ENCODE measurements at regions of chr17 and their contacts with region 1.

Region 1: DNA sequence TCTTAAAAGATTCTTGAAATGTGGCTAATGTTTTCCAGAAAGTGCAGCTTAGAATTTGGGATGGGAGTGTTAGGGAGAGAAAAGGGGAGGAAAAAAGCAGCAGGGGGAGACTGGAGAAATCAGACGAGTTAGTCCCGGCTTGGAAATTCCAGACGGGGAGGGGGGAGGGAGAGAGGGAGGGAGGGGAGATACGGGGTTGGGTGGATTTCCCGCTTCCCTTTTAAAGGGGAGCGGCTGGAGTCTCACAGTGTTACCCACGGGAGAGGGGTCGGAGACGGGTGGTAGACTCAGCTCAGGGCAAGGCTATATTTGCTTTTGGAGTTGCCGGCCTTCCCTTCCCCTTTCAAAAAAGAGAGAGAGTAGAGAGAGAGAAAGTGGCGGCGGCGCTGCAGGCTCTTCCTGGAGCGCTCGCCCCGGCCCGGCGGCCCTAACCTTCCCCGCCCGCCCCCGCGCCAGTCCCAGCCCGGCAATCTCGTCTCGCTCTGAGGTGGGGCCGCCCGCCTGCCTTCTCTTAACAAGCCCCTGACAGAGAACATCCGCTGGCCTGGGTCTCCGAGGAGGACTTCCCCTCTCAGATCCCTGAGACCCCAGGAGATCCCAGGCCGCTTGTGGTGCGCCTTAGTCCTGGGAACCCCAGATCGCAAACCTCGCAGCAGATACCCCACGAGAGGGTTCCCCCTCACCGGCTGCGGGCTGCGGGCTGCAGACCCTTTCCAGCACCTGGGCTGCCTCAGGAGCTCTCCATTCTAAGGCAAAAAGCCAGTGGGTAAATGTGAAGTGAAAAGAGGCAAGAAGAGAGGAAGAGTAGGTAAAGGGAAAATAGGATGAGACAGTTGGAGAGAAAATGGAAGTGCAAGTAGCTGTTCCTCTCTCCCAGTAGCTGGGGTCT is 6.7 kb downstream of the IGF2BP1 start:
- DNase-seq: no peak
- ATAC-seq: peak; percentile 69
- H3K4me3 ChIP-seq: peak overlapping the region; percentile 62 to 97 (median 62)
- H3K27ac ChIP-seq: peak overlapping the region; percentile 95
- H3K4me1 ChIP-seq: peaks cover 72% of the 10 kb centered on the region
- H3K27me3 ChIP-seq: no peaks in the 10 kb centered on the region; a peak in 1 of 5 replicates
- CTCF ChIP-seq: peak; percentile 26; the same call in 1 of the 2 replicates
- EP300 ChIP-seq: no peak
- POLR2A ChIP-seq: no peak
- RAD21 ChIP-seq: no peak

Region 2: GRCh38 chr17:48841395-48841831 is 162.5 kb before region 1 on chr17:
- CTCF ChIA-PET with region 1: no interaction called
- POLR2A ChIA-PET with region 1: no interaction called
- in situ Hi-C with region 1: no loop called
- intact Hi-C with region 1: no loop called
- DNase-seq: no peak
- ATAC-seq: no peak
- H3K4me3 ChIP-seq: no peak overlapping the region
- H3K27ac ChIP-seq: no peak overlapping the region
- H3K4me1 ChIP-seq: 0 out of 2 replicates have a peak, but pooled peaks cover 8% of the 10 kb centered on the region
- H3K27me3 ChIP-seq: no peaks in the 10 kb centered on the region
- CTCF ChIP-seq: no peak
- EP300 ChIP-seq: no peak
- POLR2A ChIP-seq: no peak
- RAD21 ChIP-seq: no peak

Region 3: DNA sequence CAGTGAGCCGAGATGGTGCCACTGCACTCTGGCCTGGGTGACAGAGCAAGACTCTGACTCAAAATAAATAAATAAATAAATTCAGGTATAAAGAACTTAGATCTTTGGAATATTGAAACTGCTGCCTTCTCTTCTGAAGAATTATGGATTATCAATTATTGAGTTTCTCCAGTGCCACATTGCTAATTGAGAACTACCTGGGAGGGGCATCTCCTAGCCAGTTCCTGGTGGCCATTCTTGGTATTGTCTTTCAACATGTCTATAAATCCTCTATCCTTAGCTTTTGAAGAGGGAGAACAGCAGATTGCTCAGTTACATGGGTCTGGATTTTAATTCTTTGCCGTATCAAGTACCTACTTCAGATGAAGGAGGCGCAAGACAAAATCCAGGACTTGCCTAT is 143.8 kb before region 1 on chr17:
- CTCF ChIA-PET with region 1: no interaction called
- POLR2A ChIA-PET with region 1: no interaction called
- in situ Hi-C with region 1: no loop called
- intact Hi-C with region 1: no loop called
- DNase-seq: no peak
- ATAC-seq: peak; percentile 62
- H3K4me3 ChIP-seq: no peak overlapping the region
- H3K27ac ChIP-seq: no peak overlapping the region
- H3K4me1 ChIP-seq: no peaks in the 10 kb centered on the region
- H3K27me3 ChIP-seq: no peaks in the 10 kb centered on the region
- CTCF ChIP-seq: no peak
- EP300 ChIP-seq: no peak
- POLR2A ChIP-seq: no peak
- RAD21 ChIP-seq: no peak

Region 4: DNA sequence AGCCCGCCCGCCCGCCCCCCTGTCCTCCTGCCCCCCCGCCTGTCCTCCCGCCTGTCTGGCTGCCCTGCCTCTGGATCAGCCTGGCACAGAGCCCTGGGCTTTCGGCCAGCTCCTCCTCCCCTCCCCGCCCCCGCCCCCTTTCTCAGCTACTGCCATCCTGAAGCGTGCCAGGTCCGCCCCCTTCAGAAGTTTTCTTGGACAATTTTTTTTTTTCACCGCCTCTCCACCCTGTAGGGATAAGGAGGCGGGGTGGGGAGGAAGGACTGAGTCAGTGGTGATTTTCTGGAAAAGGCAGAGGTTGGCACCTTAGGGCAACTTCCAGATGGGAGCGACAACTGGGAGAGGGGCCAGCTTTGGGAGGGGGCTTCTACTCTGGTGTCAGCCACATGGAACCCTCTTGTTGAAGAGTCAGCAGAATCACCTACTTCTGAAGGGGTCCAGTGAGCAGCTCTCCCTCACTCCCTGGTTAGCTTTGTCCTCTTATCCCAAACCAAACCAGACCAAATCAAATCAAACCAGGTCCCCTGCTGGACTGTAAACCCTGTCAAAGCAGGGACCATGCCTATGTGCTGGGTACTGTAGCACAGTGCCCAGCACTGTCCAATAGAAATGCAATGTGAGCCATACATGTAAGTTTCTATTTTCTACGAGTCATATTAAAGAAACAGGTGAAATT is 13.1 kb after region 1 on chr17:
- CTCF ChIA-PET with region 1: no interaction called
- POLR2A ChIA-PET with region 1: interaction called, 65 read pairs
- in situ Hi-C with region 1: no loop called
- intact Hi-C with region 1: loop called (anchors 1 kb)
- DNase-seq: no peak
- ATAC-seq: no peak
- H3K4me3 ChIP-seq: no peak overlapping the region
- H3K27ac ChIP-seq: no peak overlapping the region
- H3K4me1 ChIP-seq: peaks cover 92% of the 10 kb centered on the region
- H3K27me3 ChIP-seq: no peaks in the 10 kb centered on the region
- CTCF ChIP-seq: no peak
- EP300 ChIP-seq: no peak
- POLR2A ChIP-seq: 0 out of 4 replicates have a peak, but pooled peaks of 1 of the 2 experiments have one; percentile 17
- RAD21 ChIP-seq: no peak

Region 5: DNA sequence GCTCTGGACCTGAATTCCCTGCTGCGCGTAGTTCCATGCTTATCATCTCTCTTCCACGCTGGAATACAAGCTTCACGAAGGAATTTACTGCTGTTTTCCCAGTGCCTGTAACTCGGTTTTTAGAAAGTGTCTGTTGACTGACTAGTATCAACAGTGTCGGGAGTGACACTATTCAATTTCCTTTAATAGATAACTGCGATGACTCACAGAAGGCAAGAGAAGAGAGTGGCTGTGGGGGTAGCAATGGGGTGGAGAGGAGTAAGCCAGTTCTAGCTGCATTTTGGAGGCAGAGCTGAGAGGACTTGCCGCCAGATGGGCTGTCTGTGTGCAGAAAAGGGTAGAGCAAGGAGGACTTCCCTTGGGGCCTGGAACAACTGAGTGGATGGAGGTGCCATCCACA is 153.9 kb after region 1 on chr17:
- CTCF ChIA-PET with region 1: no interaction called
- POLR2A ChIA-PET with region 1: no interaction called
- in situ Hi-C with region 1: no loop called
- intact Hi-C with region 1: no loop called
- DNase-seq: no peak
- ATAC-seq: peak; percentile 55
- H3K4me3 ChIP-seq: no peak overlapping the region
- H3K27ac ChIP-seq: no peak overlapping the region
- H3K4me1 ChIP-seq: peaks cover 8% of the 10 kb centered on the region; the same call in 1 of the 2 replicates
- H3K27me3 ChIP-seq: peaks cover 2 to 41% of the 10 kb centered on the region in 2 experiments; a peak in 4 of 5 replicates
- CTCF ChIP-seq: no peak
- EP300 ChIP-seq: no peak
- POLR2A ChIP-seq: no peak
- RAD21 ChIP-seq: no peak

Measured in HepG2 (cell line).